ENCODE measurements at regions of chr4 and their contacts with region 1.

Region 1: DNA sequence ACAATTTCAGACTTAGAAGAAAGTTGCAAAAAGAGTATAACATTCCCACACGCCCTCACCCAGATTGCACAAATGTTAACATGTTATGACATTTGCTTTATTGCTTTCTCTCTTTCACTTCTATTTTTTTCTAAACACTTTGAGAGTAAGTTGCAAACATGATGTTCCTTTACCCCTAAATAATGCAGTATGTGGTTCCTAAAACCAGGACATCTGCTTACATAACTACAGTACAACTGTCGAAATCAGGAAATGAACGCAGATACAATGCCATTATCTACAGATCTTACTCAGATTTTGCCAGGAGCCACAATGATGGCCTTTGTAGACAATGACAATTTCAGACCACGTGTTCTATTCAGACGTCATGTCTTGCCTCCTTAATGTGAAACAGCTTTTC is 22.4 kb downstream of the SH3TC1 start:
- H3K4me3 Mint-ChIP-seq: no peak overlapping the region
- H3K27ac Mint-ChIP-seq: peak overlapping the region; percentile 42
- H3K4me1 Mint-ChIP-seq: peaks cover 80% of the 10 kb centered on the region
- H3K27me3 Mint-ChIP-seq: peaks cover 3% of the 10 kb centered on the region

Region 2: DNA sequence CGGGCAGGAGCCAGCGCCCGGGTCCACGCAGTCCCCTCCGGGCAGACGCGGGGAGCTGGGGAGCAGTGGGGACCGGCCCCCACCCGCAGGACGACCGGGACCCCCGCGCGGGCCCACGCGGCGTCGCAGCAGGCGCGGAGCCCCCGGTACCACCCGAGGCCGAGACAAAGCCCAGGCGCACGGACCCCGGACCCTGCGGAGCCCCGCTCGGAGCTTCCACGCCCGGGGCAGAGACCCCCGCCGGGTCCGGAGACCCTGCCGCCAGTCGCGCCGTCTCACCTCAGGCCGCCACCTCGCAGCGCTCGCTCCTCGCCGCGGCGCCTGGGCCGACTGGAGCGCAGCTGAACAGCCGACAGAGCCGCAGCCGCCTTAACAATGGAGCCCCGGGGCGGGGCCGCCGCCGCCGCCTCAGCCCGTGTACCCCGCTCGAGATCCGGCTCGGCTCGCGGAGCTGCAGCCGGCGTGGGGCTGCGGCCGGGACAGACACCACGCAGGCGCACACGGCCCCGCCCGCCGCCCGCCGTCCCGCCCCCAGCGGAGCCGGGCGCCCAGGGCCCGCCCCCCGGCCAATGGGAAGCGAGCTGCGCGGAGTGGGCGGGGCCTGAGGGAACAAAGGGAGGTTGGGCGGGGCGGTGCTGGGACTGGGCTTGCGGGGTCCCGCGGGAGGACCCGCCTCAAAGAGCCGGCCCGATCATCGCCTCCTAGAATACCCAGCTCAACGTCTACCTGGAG is 281.9 kb before region 1 on chr4 and contains the start of gene AFAP1:
- intact Hi-C with region 1: no loop called
- H3K4me3 Mint-ChIP-seq: no peak within 1 kb of the TSS
- H3K27ac Mint-ChIP-seq: no peak within 1 kb of the TSS
- H3K4me1 Mint-ChIP-seq: no peaks in the 10 kb centered on the region
- H3K27me3 Mint-ChIP-seq: peaks cover 58% of the 10 kb centered on the region

Region 3: GRCh38 chr4:8205749-8206611 is 15.5 kb before region 1 on chr4:
- intact Hi-C with region 1: loop called (anchors 2 kb)
- H3K4me3 Mint-ChIP-seq: peak overlapping the region; percentile 24
- H3K27ac Mint-ChIP-seq: peak overlapping the region; percentile 15
- H3K4me1 Mint-ChIP-seq: peaks cover 92% of the 10 kb centered on the region
- H3K27me3 Mint-ChIP-seq: no peaks in the 10 kb centered on the region

Measured in dendritic cell treated with granulocyte-macrophage colony-stimulating factor and Interleukin-4, amounts not matched to agents 40 ng/mL and 50 ng/mL, for 4 days (primary cell).